ENCODE measurements at regions of chr7 and their contacts with region 1.

Region 1: GRCh38 chr7:142385491-142386340 is 127.9 kb upstream of the PRSS58 start:
- DNase-seq: peak; percentile 70
- H3K4me3 ChIP-seq: no peak overlapping the region
- H3K27ac ChIP-seq: no peak overlapping the region
- H3K4me1 ChIP-seq: peaks cover 20% of the 10 kb centered on the region
- H3K27me3 ChIP-seq: no peaks in the 10 kb centered on the region
- CTCF ChIP-seq: peak; percentile 86 to 89

Region 2: GRCh38 chr7:142345811-142346210 is 39.9 kb before region 1 on chr7:
- CTCF ChIA-PET with region 1: no interaction called
- dilution Hi-C with region 1: no loop called
- in situ Hi-C with region 1: no loop called
- intact Hi-C with region 1: loop called (anchors 5 kb)
- DNase-seq: no peak
- H3K4me3 ChIP-seq: no peak overlapping the region
- H3K27ac ChIP-seq: no peak overlapping the region
- H3K4me1 ChIP-seq: peaks cover 15% of the 10 kb centered on the region
- H3K27me3 ChIP-seq: no peaks in the 10 kb centered on the region
- CTCF ChIP-seq: no peak

Region 3: GRCh38 chr7:142357953-142358520 is 27.7 kb before region 1 on chr7:
- CTCF ChIA-PET with region 1: interaction called, 4 read pairs
- dilution Hi-C with region 1: no loop called
- in situ Hi-C with region 1: no loop called
- intact Hi-C with region 1: loop called (anchors 1 kb)
- DNase-seq: peak; percentile 65
- H3K4me3 ChIP-seq: no peak overlapping the region
- H3K27ac ChIP-seq: no peak overlapping the region
- H3K4me1 ChIP-seq: no peaks in the 10 kb centered on the region
- H3K27me3 ChIP-seq: no peaks in the 10 kb centered on the region
- CTCF ChIP-seq: peak; percentile 82 to 92

Region 4: DNA sequence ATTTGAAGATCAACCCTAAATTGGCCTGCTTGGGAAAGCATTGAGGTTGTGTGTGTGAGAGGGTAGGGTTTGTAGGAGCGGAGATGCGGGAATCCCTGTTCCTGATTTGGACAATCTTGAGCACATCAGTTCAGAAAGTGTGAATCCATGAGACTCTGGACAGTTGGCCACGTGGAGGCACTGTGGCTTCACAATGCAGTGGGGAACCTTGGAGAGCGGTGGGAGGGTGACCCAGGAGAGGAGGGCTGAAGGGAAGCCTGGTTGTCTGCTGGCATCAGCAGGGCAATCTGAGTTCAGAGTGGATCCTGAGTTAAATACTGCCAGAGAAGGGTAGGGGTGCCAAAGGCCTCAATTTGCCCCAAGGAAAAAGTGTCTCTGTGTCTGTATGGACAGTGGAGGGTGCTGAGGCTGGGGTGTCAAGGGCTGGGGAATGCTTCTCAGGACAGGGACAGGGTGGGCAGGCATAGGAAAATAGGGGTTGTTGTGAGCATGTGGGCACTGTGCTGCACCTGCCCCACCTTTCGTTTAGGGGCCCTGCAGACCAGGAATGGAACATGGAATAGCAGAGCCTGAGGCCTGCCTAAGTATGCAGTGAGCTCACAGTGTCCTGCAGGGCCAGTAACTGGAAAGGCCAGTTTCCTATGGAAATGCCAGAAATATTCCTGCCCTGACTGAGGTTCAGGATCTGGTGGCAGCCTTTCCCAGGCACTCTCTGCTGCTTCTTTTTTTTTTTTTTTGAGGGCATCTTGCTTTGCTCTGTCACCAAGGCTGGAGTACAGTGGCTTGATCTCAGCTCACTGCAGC is 35.0 kb after region 1 on chr7:
- CTCF ChIA-PET with region 1: no interaction called
- dilution Hi-C with region 1: loop called (anchors 5 kb)
- in situ Hi-C with region 1: no loop called
- intact Hi-C with region 1: no loop called
- DNase-seq: peak; percentile 14
- H3K4me3 ChIP-seq: no peak overlapping the region
- H3K27ac ChIP-seq: no peak overlapping the region
- H3K4me1 ChIP-seq: no peaks in the 10 kb centered on the region
- H3K27me3 ChIP-seq: no peaks in the 10 kb centered on the region
- CTCF ChIP-seq: no peak

Region 5: DNA sequence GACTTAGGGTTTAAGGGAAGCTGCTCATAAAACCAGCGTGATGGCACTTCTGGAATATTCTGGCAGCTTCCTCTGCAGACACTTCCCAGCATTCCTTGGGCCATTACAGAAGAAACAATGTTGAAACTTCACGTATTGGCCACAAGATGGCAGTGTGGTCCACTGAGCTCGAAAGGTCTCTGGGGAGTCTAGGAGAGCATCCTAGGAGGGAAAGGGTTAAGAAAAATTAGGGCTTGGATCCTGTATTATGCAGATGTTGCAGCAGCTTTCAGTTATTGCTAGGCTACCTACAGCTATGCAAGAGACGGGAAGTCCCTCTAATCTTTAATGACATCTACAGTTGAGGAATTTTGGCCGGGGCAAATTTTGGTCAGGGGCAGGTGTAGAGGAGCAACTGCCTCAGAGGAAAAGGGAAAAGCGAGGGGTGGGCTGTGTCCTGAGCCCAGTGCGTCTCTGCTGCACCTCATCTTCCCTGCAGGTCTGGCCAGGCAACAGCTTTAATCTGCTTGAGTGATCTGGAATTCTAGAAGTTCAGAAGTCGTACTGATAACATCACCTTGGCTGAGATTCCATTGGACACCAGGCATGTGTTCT is 92.9 kb after region 1 on chr7:
- CTCF ChIA-PET with region 1: no interaction called
- dilution Hi-C with region 1: loop called (anchors 5 kb)
- in situ Hi-C with region 1: no loop called
- intact Hi-C with region 1: loop called (anchors 2 kb)
- DNase-seq: peak; percentile 46
- H3K4me3 ChIP-seq: no peak overlapping the region
- H3K27ac ChIP-seq: no peak overlapping the region
- H3K4me1 ChIP-seq: peaks cover 21% of the 10 kb centered on the region
- H3K27me3 ChIP-seq: no peaks in the 10 kb centered on the region
- CTCF ChIP-seq: peak; percentile 71 to 76

Region 6: DNA sequence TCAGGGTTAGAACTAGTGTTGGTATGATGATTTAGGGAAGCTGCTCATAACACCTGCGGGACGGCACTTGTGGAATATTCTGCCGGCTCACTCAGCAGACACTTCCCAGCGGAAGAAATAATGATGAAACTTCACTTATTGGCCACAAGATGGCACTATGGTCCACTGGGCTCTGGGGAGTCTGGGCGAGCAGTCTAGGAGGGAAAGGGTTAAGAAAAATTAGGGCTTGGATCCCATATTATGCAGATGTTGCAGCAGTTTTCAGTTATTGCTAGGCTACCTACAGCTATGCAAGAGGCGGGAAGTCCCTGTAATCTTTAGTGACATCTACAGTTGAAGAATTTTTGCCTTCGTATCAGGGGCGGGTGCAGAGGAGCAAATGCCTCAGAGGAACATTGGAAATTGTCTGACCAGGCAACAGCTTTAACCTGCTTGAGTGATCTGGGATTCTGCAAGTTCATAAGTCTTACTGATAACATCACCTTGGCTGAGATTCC is 110.9 kb after region 1 on chr7:
- CTCF ChIA-PET with region 1: interaction called, 3 read pairs
- dilution Hi-C with region 1: no loop called
- in situ Hi-C with region 1: no loop called
- intact Hi-C with region 1: loop called (anchors 5 kb)
- DNase-seq: peak; percentile 46
- H3K4me3 ChIP-seq: no peak overlapping the region
- H3K27ac ChIP-seq: no peak overlapping the region
- H3K4me1 ChIP-seq: peaks cover 22% of the 10 kb centered on the region
- H3K27me3 ChIP-seq: no peaks in the 10 kb centered on the region
- CTCF ChIP-seq: peak; percentile 67 to 74

Measured in mammary epithelial cell (primary cell).